Activated CD8-positive, alpha-beta T cell treated with anti-CD3 and anti-CD28 coated beads for 36 hours (primary cell): ENCODE measurements at regions of chr9 and their contacts with region 1.

Region 1: DNA sequence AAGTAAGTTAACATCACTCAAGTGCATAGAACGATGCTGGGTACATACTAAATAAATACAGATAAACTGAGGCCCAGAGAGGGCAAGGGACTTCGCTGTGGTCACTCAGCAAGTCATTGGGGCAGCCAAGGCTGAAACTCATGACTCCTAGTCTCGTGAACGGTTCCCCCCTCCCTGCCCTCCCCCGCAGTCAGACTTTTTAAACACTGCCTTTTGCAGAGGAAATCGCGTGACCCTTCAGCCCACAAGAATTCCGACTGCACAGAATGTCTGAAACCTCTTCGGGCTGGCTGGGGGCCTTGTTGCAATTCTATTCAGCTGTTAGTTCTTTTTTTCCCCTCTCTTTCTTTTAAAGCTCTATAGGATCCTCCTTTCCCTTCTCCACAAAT is 28.1 kb downstream of the NEK6 start:
- DNase-seq: peak; percentile 85
- ATAC-seq: peak; percentile 38
- H3K4me3 Mint-ChIP-seq: peak overlapping the region; percentile 57
- H3K27ac Mint-ChIP-seq: peak overlapping the region; percentile 96
- H3K4me1 Mint-ChIP-seq: peaks cover 54% of the 10 kb centered on the region
- H3K27me3 Mint-ChIP-seq: no peaks in the 10 kb centered on the region
- CTCF ChIP-seq: no peak

Region 2: GRCh38 chr9:124202447-124202971 is 83.4 kb before region 1 on chr9:
- CTCF ChIA-PET with region 1: no interaction called
- POLR2A ChIA-PET with region 1: interaction called, 6 read pairs
- intact Hi-C with region 1: loop called (anchors 5 kb)
- DNase-seq: peak; percentile 98
- ATAC-seq: peak; percentile 94
- H3K4me3 Mint-ChIP-seq: peak overlapping the region; percentile 42
- H3K27ac Mint-ChIP-seq: peak overlapping the region; percentile 95
- H3K4me1 Mint-ChIP-seq: peaks cover 42% of the 10 kb centered on the region
- H3K27me3 Mint-ChIP-seq: peaks cover 6% of the 10 kb centered on the region
- CTCF ChIP-seq: no peak

Region 3: GRCh38 chr9:124262434-124262972 is 23.4 kb before region 1 on chr9:
- CTCF ChIA-PET with region 1: no interaction called
- POLR2A ChIA-PET with region 1: no interaction called
- intact Hi-C with region 1: no loop called
- DNase-seq: no peak
- ATAC-seq: no peak
- H3K4me3 Mint-ChIP-seq: no peak overlapping the region
- H3K27ac Mint-ChIP-seq: no peak overlapping the region
- H3K4me1 Mint-ChIP-seq: peaks cover 30% of the 10 kb centered on the region
- H3K27me3 Mint-ChIP-seq: peaks cover 28% of the 10 kb centered on the region
- CTCF ChIP-seq: no peak

Region 4: GRCh38 chr9:124297553-124297905 is 11.6 kb after region 1 on chr9:
- CTCF ChIA-PET with region 1: no interaction called
- POLR2A ChIA-PET with region 1: no interaction called
- intact Hi-C with region 1: no loop called
- DNase-seq: no peak
- ATAC-seq: no peak
- H3K4me3 Mint-ChIP-seq: no peak overlapping the region
- H3K27ac Mint-ChIP-seq: no peak overlapping the region
- H3K4me1 Mint-ChIP-seq: peaks cover 27% of the 10 kb centered on the region
- H3K27me3 Mint-ChIP-seq: peaks cover 5% of the 10 kb centered on the region
- CTCF ChIP-seq: no peak